ENCODE measurements at regions of chr2 and their contacts with region 1.

Region 1: GRCh38 chr2:130873700-130874346 is 37.1 kb downstream of the ARHGEF4 start:
- DNase-seq: peak; percentile 82
- ATAC-seq: peak; percentile 83
- H3K4me3 Mint-ChIP-seq: no peak overlapping the region
- H3K27ac Mint-ChIP-seq: no peak overlapping the region
- H3K4me1 Mint-ChIP-seq: no peaks in the 10 kb centered on the region
- H3K27me3 Mint-ChIP-seq: peaks cover 16% of the 10 kb centered on the region

Region 2: GRCh38 chr2:130791608-130791922 is 82.3 kb before region 1 on chr2:
- CTCF ChIA-PET with region 1: interaction called, 271 read pairs
- DNase-seq: no peak
- ATAC-seq: no peak
- H3K4me3 Mint-ChIP-seq: no peak overlapping the region
- H3K27ac Mint-ChIP-seq: no peak overlapping the region
- H3K4me1 Mint-ChIP-seq: peaks cover 11% of the 10 kb centered on the region
- H3K27me3 Mint-ChIP-seq: peaks cover 7% of the 10 kb centered on the region

Region 3: DNA sequence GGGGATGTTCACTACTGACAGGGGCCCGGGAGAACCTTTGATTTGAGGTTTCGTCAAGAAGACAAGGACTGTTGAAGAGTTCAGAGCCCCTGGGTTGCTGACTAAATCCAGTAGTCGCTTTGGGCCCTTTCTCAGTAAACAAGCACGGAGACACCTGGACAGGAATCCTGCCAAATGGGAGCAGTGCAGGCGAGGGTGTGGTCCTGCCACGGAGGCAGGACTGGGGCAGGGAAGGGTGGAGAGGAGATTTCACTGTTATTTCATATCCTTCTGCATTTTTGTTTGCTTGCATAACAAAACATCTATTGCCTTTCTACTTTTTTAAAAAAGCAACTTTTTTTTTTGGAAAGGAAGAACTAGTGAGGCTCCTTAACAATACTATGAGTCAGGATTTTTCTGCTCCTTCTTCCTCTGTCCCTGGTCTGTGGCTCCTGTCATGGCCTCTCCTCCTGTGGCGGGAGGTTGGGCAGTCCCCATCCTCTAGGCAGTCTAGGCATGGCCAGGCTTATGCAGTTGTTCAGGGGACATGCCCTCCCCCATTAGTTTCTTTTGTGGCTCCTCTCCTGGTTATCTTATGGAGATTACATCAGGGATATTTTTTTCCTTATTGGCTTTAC is 20.6 kb after region 1 on chr2:
- CTCF ChIA-PET with region 1: no interaction called
- DNase-seq: no peak
- ATAC-seq: no peak
- H3K4me3 Mint-ChIP-seq: no peak overlapping the region
- H3K27ac Mint-ChIP-seq: no peak overlapping the region
- H3K4me1 Mint-ChIP-seq: no peaks in the 10 kb centered on the region
- H3K27me3 Mint-ChIP-seq: peaks cover 4% of the 10 kb centered on the region

Region 4: GRCh38 chr2:131030478-131030971 is 156.7 kb after region 1 on chr2:
- CTCF ChIA-PET with region 1: no interaction called
- DNase-seq: no peak
- ATAC-seq: no peak
- H3K4me3 Mint-ChIP-seq: no peak overlapping the region
- H3K27ac Mint-ChIP-seq: no peak overlapping the region
- H3K4me1 Mint-ChIP-seq: peaks cover 2% of the 10 kb centered on the region
- H3K27me3 Mint-ChIP-seq: peaks cover 42% of the 10 kb centered on the region